PC-3 (cell line): ENCODE measurements at regions of chr10 and their contacts with region 1.

Region 1: GRCh38 chr10:93680412-93681047 is 21.9 kb downstream of the FRA10AC1 start:
- DNase-seq: peak; percentile 78
- ATAC-seq: peak; percentile 69
- H3K4me3 ChIP-seq: no peak overlapping the region
- H3K27ac ChIP-seq: no peak overlapping the region
- H3K4me1 ChIP-seq: no peaks in the 10 kb centered on the region
- H3K27me3 ChIP-seq: no peaks in the 10 kb centered on the region
- CTCF ChIP-seq: peak; percentile 69

Region 2: DNA sequence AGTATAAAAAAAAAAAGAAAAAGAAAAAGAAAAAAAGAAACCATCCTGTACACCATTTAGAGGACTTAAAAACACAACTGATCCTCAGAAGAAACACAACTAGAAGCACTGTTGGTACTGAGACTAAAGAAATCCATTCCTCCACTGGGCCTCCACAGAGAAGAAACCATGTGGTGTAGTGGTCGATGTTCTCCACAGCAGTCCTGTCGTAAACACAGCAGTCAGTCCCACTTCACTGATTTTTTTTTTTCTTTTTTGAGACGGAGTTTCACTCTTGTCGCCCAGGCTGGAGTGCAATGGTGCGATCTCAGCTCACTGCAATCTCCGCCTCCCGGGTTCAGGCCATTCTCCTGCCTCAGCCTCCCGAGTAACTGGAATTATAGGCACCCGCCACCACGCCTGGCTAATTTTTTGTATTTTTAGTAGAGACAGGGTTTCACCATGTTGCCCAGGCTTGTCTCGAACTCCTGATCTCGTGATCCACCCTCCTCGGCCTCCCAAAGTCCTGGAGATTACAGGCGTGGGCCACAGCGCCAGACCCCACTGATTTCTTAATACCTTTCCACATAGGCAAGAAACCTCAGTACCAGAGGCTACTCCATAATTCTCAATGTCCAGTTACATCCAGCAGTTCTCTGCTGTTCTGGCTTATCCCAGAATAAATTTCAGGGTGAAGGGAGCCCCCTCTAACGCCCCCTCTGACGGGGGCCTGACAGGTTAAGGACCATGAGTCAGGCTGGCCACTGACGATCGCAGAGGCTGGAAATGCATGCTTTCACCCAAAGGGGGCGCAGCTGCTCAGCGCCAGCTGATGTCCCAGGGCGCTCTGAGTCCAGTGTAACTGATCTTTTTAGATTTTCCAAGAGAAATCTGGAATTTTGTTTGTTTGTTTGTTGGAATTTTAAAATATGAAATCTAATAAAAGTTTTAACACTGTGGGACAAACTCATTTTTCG is 138.8 kb before region 1 on chr10:
- CTCF ChIA-PET with region 1: interaction called, 8 read pairs
- POLR2A ChIA-PET with region 1: interaction called, 3 read pairs
- intact Hi-C with region 1: loop called (anchors 1 kb)
- DNase-seq: peak; percentile 72
- ATAC-seq: peak; percentile 97
- H3K4me3 ChIP-seq: peak overlapping the region; percentile 60
- H3K27ac ChIP-seq: no peak overlapping the region
- H3K4me1 ChIP-seq: peaks cover 8% of the 10 kb centered on the region; the same call in 1 of the 2 replicates
- H3K27me3 ChIP-seq: no peaks in the 10 kb centered on the region
- CTCF ChIP-seq: peak; percentile 91

Region 3: GRCh38 chr10:93554760-93555432 is 125.6 kb before region 1 on chr10:
- CTCF ChIA-PET with region 1: interaction called, 21 read pairs
- POLR2A ChIA-PET with region 1: interaction called, 8 read pairs
- intact Hi-C with region 1: loop called (anchors 1 kb)
- DNase-seq: peak; percentile 77
- ATAC-seq: peak; percentile 88
- H3K4me3 ChIP-seq: no peak overlapping the region
- H3K27ac ChIP-seq: 0 out of 2 replicates have a peak overlapping the region, but pooled peaks have one; percentile 18
- H3K4me1 ChIP-seq: peaks cover 5% of the 10 kb centered on the region
- H3K27me3 ChIP-seq: no peaks in the 10 kb centered on the region
- CTCF ChIP-seq: peak; percentile 73